Psoas muscle (tissue), 8 donors: ENCODE measurements at regions of chr6 and their contacts with region 1.

Region 1: GRCh38 chr6:170388113-170388512 is 81.6 kb downstream of the FAM120B start:
- DNase-seq: no peak
- ATAC-seq: no peak
- H3K4me3 ChIP-seq: no peak overlapping the region
- H3K27ac ChIP-seq: no peak overlapping the region
- H3K4me1 ChIP-seq: no peaks in the 10 kb centered on the region
- H3K27me3 ChIP-seq: no peaks in the 10 kb centered on the region
- CTCF ChIP-seq: no peak

Region 2: DNA sequence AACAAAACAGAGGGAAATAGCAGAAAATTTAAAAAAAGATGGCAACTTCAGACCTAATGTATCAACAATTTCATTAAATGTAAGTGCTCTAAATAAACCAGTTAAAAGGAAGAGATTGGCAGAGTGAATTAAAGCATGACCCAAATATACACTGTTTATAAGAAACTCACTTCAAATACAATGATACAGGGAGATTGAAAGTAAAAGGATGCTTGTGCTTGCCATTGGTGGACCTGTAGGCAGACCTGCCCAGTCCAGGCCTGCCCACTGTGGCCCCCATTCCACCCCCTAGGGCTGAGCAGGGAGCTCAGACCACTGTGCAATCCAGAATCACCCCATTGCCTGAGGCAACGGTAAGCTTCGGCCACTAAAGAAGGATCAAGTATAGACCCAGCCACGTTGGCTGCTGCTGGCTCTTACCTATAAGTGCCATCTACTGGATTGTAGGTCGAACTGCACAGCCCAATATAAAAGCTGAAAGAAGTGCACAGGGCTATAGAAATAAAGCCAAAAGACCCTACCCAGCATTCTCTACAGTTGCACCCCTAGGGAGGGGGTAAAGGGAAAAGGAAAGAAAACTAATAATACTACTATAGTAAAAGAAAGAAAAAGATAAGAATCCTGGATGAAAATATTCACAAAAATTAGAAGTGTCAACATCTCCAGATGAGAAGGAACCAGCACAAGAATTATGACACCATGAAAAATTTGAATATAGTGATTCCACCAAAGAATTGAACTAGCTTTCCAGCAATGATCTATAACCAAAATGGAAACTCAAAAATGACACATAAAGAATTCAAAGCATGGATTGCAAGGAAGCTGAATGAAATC is 128.9 kb after region 1 on chr6:
- intact Hi-C with region 1: loop called in 1 of 2 experiments (anchors 10 kb)
- DNase-seq: peak in 1 of 2 donors; percentile 23
- ATAC-seq: peak; percentile 72 to 92 (median 88)
- H3K4me3 ChIP-seq: no peak overlapping the region
- H3K27ac ChIP-seq: no peak overlapping the region
- H3K4me1 ChIP-seq: peaks cover 13% of the 10 kb centered on the region
- H3K27me3 ChIP-seq: no peaks in the 10 kb centered on the region
- CTCF ChIP-seq: peak; percentile 63